ENCODE measurements at regions of chr9 and their contacts with region 1.

Region 1: GRCh38 chr9:126301985-126302603 is 24.5 kb upstream of the MVB12B start:
- DNase-seq: peak; percentile 70
- H3K4me3 ChIP-seq: no peak overlapping the region
- H3K27ac ChIP-seq: no peak overlapping the region
- H3K4me1 ChIP-seq: peaks cover 0 to 19% (median 14%) of the 10 kb centered on the region in 4 donors
- H3K27me3 ChIP-seq: no peaks in the 10 kb centered on the region
- CTCF ChIP-seq: peak; percentile 65 to 82 (median 70)
- EP300 ChIP-seq: no peak
- POLR2A ChIP-seq: no peak

Region 2: DNA sequence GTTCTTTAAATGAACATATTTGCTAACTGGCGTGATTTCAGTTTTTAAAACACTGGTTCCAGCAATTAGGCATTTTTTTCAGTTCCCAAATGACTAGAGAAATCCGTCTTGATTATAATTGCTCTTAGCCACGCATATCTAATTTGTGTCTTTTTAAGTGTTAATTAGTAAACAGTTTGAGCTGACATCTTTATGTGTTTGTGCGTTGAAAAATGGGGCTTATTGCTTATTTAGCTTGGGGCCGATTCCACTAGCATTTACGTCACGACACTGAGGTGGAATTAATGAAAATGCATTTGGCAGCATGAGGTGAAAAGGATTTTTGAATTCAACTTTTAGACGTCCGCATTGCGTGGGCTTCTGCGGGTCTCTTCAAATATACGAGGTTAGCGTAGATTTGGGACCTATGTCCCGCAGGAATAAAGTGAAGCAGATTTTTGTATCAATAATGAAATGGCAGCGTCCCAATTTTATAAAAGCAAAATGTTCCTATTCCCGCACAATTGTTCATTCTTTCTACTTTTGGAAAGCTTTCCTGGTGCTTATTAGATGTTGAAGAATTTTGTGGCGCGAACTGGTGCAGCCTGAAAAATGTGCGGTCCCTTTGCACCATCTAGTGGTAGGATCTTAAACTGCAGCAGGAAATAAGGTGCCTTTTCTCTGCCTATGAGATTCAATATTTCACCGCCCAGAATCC is 188.9 kb after region 1 on chr9:
- in situ Hi-C with region 1: loop called in 3 of 4 experiments (anchors 10 to 25 kb)
- intact Hi-C with region 1: no loop called
- DNase-seq: peak; percentile 43
- H3K4me3 ChIP-seq: no peak overlapping the region
- H3K27ac ChIP-seq: no peak overlapping the region
- H3K4me1 ChIP-seq: no peaks in the 10 kb centered on the region
- H3K27me3 ChIP-seq: no peaks in the 10 kb centered on the region
- CTCF ChIP-seq: peak; percentile 94 to 97 (median 96)
- EP300 ChIP-seq: no peak
- POLR2A ChIP-seq: no peak